Right ventricle myocardium inferior (tissue), 1 donor: ENCODE measurements at regions of chr6 and their contacts with region 1.

Region 1: GRCh38 chr6:125197795-125198269 is 44.3 kb downstream of the TPD52L1 start:
- DNase-seq: no peak
- ATAC-seq: peak; percentile 96

Region 2: DNA sequence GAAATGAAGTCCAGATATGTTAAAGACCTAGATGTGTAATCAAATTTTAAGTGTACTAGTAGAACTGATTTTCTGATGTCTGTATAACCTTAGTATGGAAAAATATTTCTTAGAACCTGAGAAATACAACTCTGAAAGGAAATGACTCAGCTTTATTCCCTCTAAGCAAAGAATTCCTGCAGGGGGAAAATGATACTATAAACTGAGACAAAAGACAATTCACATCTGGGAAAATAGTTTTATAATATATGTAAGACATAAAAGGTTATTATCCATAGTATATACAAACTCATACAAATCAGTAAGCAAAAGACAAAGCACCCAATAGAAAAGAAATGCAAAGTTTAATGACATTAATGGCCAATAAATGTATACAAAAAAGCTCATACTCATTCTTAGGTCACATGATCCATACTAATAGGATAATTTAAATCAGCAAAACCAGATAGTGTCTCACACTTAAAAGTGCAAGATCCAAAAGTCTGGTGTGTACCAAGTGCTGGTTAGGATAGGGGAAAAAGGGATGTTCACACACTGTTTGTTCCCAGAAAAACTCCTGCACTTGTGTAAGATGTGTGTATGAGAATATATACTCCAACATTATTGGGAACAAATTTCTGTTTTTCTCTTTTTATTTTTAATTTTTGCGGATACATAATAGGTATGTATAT is 213.0 kb before region 1 on chr6:
- intact Hi-C with region 1: no loop called
- DNase-seq: no peak
- ATAC-seq: no peak

Region 3: GRCh38 chr6:125114248-125114858 is 83.5 kb before region 1 on chr6:
- intact Hi-C with region 1: no loop called
- DNase-seq: no peak
- ATAC-seq: no peak

Region 4: GRCh38 chr6:125301435-125302391 is 103.9 kb after region 1 on chr6 and contains the start of gene HDDC2:
- intact Hi-C with region 1: loop called (anchors 5 kb)
- DNase-seq: peak; percentile 92
- ATAC-seq: peak; percentile 90
- total RNA-seq, gene HDDC2: 91.6 TPM